T-cell (primary cell): ENCODE measurements at regions of chr20 and their contacts with region 1.

Region 1: DNA sequence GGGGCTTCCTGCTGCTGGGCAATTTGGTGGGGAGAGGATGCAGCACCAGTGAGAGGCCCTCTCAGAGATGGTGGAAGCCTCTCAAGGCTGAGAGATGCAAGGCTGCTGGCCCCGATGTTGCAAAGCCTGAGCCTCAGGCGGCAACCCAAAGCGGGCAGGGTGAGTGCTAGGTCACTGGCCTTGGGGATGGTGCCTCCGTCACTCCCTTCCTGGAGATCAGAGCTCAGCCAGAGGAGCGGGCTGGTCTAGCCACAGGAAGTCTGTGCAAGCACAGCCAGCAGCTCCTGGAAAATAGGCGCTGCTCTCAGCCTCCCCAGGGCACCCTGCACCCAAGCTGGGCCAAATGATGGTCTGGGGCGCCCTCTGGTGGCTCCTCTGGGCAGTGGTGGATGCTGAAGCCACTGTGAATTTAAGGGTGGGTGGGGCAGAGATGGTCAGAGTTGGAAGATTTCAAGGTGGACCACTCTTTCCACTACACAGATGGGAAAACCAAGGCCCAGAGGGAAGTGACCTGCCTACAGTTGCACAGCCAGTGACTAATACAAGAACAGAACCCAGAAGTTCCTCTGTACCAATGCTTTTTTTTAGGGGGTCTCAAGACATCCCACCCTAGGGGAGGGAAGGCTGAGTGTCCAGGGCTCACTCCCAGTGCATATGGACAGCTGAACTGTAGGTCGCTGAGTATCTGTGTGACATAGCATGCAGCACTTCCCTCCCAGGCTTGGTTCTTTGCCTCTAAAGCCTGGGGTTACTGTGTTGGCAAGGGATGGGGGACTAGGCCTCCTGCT is 20.8 kb downstream of the C20orf203 start:
- DNase-seq: peak; percentile 64 to 93 (median 84)
- ATAC-seq: peak; percentile 98 to 99 (median 98)
- H3K4me3 ChIP-seq: peak overlapping the region in 1 of 2 donors; percentile 12
- H3K4me3 Mint-ChIP-seq: peak overlapping the region; percentile 3 to 47 (median 18)
- H3K27ac ChIP-seq: no peak overlapping the region
- H3K27ac Mint-ChIP-seq: peak overlapping the region in 1 of 2 donors; percentile 67
- H3K4me1 ChIP-seq: peaks cover 0 to 10% of the 10 kb centered on the region in 2 experiments
- H3K4me1 Mint-ChIP-seq: peaks cover 6 to 13% (median 8%) of the 10 kb centered on the region in 3 donors
- H3K27me3 ChIP-seq: peaks cover 0 to 2% of the 10 kb centered on the region in 2 experiments
- H3K27me3 Mint-ChIP-seq: no peaks in the 10 kb centered on the region

Region 2: GRCh38 chr20:32521780-32522525 is 131.0 kb before region 1 on chr20:
- CTCF ChIA-PET with region 1: interaction called, 33 to 41 read pairs
- POLR2A ChIA-PET with region 1: no interaction called
- DNase-seq: peak in 32 of 35 experiments; percentile 40 to 84 (median 61)
- ATAC-seq: peak; percentile 70 to 86 (median 75)
- H3K4me3 ChIP-seq: no peak overlapping the region
- H3K4me3 Mint-ChIP-seq: peak overlapping the region in 1 of 3 donors; percentile 59
- H3K27ac ChIP-seq: peak overlapping the region; percentile 48
- H3K27ac Mint-ChIP-seq: peak overlapping the region; percentile 95
- H3K4me1 ChIP-seq: peaks cover 47 to 72% of the 10 kb centered on the region in 2 experiments
- H3K4me1 Mint-ChIP-seq: peaks cover 58 to 68% (median 61%) of the 10 kb centered on the region in 3 donors
- H3K27me3 ChIP-seq: no peaks in the 10 kb centered on the region
- H3K27me3 Mint-ChIP-seq: no peaks in the 10 kb centered on the region